ENCODE measurements at regions of chr11 and their contacts with region 1.

Region 1: GRCh38 chr11:7892840-7893254 is 38.2 kb downstream of the OR10A6 start:
- DNase-seq: no peak

Region 2: DNA sequence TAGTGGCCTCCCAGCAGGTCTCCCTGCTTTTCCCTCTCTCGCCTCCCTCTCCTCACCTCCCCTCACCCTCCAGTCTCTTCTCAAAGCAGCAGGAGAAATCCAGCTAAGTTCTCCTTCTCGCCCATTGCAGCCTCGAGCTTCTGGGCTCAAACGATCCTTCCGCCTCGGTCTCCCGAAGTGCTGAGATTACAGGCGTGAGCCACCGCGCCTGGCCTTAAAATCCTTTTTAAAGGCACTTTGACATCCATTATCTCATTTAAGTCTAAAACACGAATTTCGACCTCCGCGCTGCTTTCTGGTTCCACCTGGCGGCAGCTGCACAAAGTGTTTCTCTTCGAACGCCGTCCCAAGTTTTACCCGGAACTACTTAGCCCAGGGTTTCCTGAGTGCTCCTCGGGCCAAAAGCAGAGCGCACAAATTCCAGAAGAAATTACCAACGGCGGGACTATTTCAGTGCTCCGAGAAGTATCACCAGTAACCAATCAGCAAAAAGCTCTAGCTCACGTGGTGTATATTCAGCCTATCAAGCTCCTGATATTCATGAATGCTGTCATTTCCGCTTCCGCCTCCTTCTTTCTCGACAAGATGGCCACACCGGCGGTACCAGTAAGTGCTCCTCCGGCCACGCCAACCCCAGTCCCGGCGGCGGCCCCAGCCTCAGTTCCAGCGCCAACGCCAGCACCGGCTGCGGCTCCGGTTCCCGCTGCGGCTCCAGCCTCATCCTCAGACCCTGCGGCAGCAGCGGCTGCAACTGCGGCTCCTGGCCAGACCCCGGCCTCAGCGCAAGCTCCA is 94.1 kb after region 1 on chr11 and contains the start of gene EIF3F:
- intact Hi-C with region 1: loop called (anchors 2 kb)
- DNase-seq: peak; percentile 92
- total RNA-seq, gene EIF3F: 123 TPM

Measured in cardiac septum (tissue), 1 donor.